ENCODE measurements at regions of chr3 and their contacts with region 1.

Region 1: GRCh38 chr3:100665230-100665629 is 44.1 kb upstream of the TFG start:
- DNase-seq: peak; percentile 57
- ATAC-seq: peak; percentile 92
- H3K4me3 Mint-ChIP-seq: no peak overlapping the region
- H3K27ac Mint-ChIP-seq: peak overlapping the region; percentile 38
- H3K4me1 Mint-ChIP-seq: peaks cover 25% of the 10 kb centered on the region
- H3K27me3 Mint-ChIP-seq: peaks cover 3% of the 10 kb centered on the region

Region 2: DNA sequence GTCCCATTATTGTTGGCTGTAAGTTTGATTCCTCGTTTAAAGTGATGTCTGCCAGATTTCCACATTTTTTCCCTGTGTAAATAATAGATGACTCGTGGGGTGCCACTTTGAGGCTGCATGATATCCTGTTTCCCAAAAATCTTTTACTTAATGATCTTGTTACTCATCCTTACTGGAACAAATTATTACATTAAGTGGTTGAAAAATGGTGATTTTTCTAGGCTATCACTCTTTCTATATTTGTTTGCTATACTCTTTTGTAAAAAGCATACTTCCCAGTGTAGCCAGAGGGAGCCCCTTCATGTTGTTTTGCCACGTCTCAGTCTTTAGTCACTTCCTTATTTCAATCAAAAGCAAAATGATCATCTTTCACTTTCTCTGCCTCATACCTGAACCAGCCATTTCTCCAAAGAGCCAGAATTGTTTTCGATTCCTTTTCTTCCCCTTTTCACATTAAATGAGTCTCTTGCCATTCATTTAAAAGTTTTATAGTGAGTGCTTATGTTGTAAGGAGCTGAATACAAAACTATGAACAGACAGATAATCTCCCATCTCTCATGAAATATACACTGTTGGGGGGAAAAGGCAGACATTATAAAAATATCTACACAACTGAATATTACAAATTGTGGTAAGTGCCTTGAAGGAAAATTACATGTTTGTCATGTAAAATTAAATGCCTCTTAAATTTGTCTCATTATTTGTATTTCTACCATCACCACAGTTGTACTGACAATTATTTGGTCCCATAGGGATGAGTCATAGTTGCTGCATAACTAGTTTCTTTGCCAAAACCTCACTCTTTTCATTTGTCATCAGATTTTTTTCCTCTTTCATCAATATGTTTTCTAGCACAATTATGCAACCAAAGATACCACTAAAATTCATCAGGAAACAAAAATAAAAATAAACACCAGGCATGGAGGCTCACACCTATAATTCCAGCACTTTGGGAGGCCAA is 14.3 kb before region 1 on chr3:
- CTCF ChIA-PET with region 1: interaction called, 4 read pairs
- POLR2A ChIA-PET with region 1: no interaction called
- intact Hi-C with region 1: loop called (anchors 1 to 2 kb)
- DNase-seq: peak; percentile 44
- ATAC-seq: peak; percentile 100
- H3K4me3 Mint-ChIP-seq: peak overlapping the region; percentile 52
- H3K27ac Mint-ChIP-seq: peak overlapping the region; percentile 87
- H3K4me1 Mint-ChIP-seq: peaks cover 20% of the 10 kb centered on the region
- H3K27me3 Mint-ChIP-seq: no peaks in the 10 kb centered on the region